ENCODE measurements at regions of chr10 and their contacts with region 1.

Region 1: GRCh38 chr10:103645141-103646054 is 151.9 kb downstream of the NEURL1 start:
- DNase-seq: peak; percentile 86 to 88
- ATAC-seq: peak; percentile 51 to 63 (median 58)
- H3K4me3 ChIP-seq: no peak overlapping the region
- H3K27ac ChIP-seq: peak overlapping the region; percentile 82
- H3K4me1 ChIP-seq: peaks cover 79% of the 10 kb centered on the region
- H3K27me3 ChIP-seq: no peaks in the 10 kb centered on the region
- CTCF ChIP-seq: no peak

Region 2: GRCh38 chr10:103612462-103613365 is 32.7 kb before region 1 on chr10:
- intact Hi-C with region 1: loop called (anchors 5 kb)
- DNase-seq: no peak
- ATAC-seq: peak; percentile 50 to 66 (median 57)
- H3K4me3 ChIP-seq: no peak overlapping the region
- H3K27ac ChIP-seq: no peak overlapping the region
- H3K4me1 ChIP-seq: peaks cover 74% of the 10 kb centered on the region
- H3K27me3 ChIP-seq: no peaks in the 10 kb centered on the region
- CTCF ChIP-seq: no peak

Region 3: GRCh38 chr10:103712570-103713498 is 67.4 kb after region 1 on chr10:
- intact Hi-C with region 1: no loop called
- DNase-seq: peak; percentile 75 to 87
- ATAC-seq: peak; percentile 87 to 96 (median 90)
- H3K4me3 ChIP-seq: no peak overlapping the region
- H3K27ac ChIP-seq: no peak overlapping the region
- H3K4me1 ChIP-seq: peaks cover 4% of the 10 kb centered on the region
- H3K27me3 ChIP-seq: no peaks in the 10 kb centered on the region
- CTCF ChIP-seq: peak; percentile 95

Region 4: GRCh38 chr10:103812432-103812831 is 167.0 kb after region 1 on chr10:
- intact Hi-C with region 1: no loop called
- DNase-seq: peak in 1 of 2 donors; percentile 45
- ATAC-seq: no peak
- H3K4me3 ChIP-seq: no peak overlapping the region
- H3K27ac ChIP-seq: no peak overlapping the region
- H3K4me1 ChIP-seq: peaks cover 29% of the 10 kb centered on the region
- H3K27me3 ChIP-seq: no peaks in the 10 kb centered on the region
- CTCF ChIP-seq: no peak

Measured in psoas muscle (tissue), 8 donors.